CD8-positive, alpha-beta T cell (primary cell): ENCODE measurements at regions of chr1 and their contacts with region 1.

Region 1: GRCh38 chr1:13730751-13731482 is 30.9 kb downstream of the PRDM2 start:
- DNase-seq: peak; percentile 69 to 96 (median 80)
- ATAC-seq: peak; percentile 93
- H3K4me3 ChIP-seq: peak overlapping the region; percentile 27 to 33
- H3K4me3 Mint-ChIP-seq: peak overlapping the region; percentile 74
- H3K27ac ChIP-seq: peak overlapping the region; percentile 84 to 87
- H3K27ac Mint-ChIP-seq: peak overlapping the region; percentile 98
- H3K4me1 ChIP-seq: peaks cover 68% of the 10 kb centered on the region
- H3K4me1 Mint-ChIP-seq: peaks cover 87% of the 10 kb centered on the region
- H3K27me3 ChIP-seq: no peaks in the 10 kb centered on the region
- H3K27me3 Mint-ChIP-seq: no peaks in the 10 kb centered on the region
- CTCF ChIP-seq: no peak

Region 2: GRCh38 chr1:13628711-13629110 is 102.2 kb before region 1 on chr1:
- CTCF ChIA-PET with region 1: no interaction called
- POLR2A ChIA-PET with region 1: no interaction called
- intact Hi-C with region 1: no loop called
- DNase-seq: no peak
- ATAC-seq: no peak
- H3K4me3 ChIP-seq: no peak overlapping the region
- H3K4me3 Mint-ChIP-seq: no peak overlapping the region
- H3K27ac ChIP-seq: no peak overlapping the region
- H3K27ac Mint-ChIP-seq: no peak overlapping the region
- H3K4me1 ChIP-seq: no peaks in the 10 kb centered on the region
- H3K4me1 Mint-ChIP-seq: no peaks in the 10 kb centered on the region
- H3K27me3 ChIP-seq: no peaks in the 10 kb centered on the region
- H3K27me3 Mint-ChIP-seq: peaks cover 19% of the 10 kb centered on the region
- CTCF ChIP-seq: no peak

Region 3: DNA sequence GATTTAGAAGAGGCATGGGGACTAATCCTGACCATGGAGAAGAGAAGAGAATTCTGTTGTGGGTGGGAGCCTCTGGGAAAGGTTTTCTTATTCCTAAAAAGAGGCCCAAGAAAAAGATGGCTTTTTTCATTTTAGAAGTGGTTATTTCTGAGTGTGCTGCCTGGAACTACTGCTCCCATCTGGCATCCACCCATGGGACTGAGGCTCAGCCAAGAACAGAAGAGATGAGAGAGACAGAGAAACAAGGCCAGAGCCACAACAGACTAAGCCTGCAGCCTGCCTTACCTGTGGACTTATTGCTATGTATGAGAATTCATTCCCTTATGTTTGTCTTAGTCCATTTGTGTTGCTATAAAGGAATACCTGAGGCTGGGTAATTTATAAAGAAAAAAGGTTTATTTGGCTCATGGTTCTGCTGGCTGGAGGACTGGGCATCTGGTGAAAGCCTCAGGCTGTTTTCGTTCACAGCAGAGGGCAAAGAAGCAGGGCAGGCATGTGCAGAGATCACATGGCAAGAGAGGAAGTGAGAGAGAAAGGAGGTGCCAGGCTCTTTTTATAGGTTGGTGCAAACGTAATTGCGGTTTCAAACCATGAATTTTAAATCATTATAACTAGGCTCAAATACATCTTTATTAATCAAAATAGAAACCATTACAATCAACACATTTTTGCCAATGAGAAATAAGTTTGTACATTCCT is 88.5 kb before region 1 on chr1:
- CTCF ChIA-PET with region 1: no interaction called
- POLR2A ChIA-PET with region 1: no interaction called
- intact Hi-C with region 1: no loop called
- DNase-seq: no peak
- ATAC-seq: no peak
- H3K4me3 ChIP-seq: no peak overlapping the region
- H3K4me3 Mint-ChIP-seq: no peak overlapping the region
- H3K27ac ChIP-seq: no peak overlapping the region
- H3K27ac Mint-ChIP-seq: no peak overlapping the region
- H3K4me1 ChIP-seq: no peaks in the 10 kb centered on the region
- H3K4me1 Mint-ChIP-seq: no peaks in the 10 kb centered on the region
- H3K27me3 ChIP-seq: no peaks in the 10 kb centered on the region
- H3K27me3 Mint-ChIP-seq: peaks cover 2% of the 10 kb centered on the region
- CTCF ChIP-seq: no peak

Region 4: GRCh38 chr1:13699936-13700520 is 30.9 kb before region 1 on chr1 and contains the start of gene PRDM2:
- CTCF ChIA-PET with region 1: interaction called, 35 read pairs
- POLR2A ChIA-PET with region 1: interaction called, 6 read pairs
- intact Hi-C with region 1: loop called (anchors 1 to 2 kb)
- DNase-seq: peak; percentile 38 to 85 (median 65)
- ATAC-seq: peak; percentile 43
- H3K4me3 ChIP-seq: peak within 1 kb of the TSS; percentile 67 to 80
- H3K4me3 Mint-ChIP-seq: peak within 1 kb of the TSS; percentile 92
- H3K27ac ChIP-seq: peak within 1 kb of the TSS; percentile 94 to 99
- H3K27ac Mint-ChIP-seq: peak within 1 kb of the TSS; percentile 98
- H3K4me1 ChIP-seq: peaks cover 44% of the 10 kb centered on the region
- H3K4me1 Mint-ChIP-seq: peaks cover 52% of the 10 kb centered on the region
- H3K27me3 ChIP-seq: no peaks in the 10 kb centered on the region
- H3K27me3 Mint-ChIP-seq: no peaks in the 10 kb centered on the region
- CTCF ChIP-seq: no peak
- total RNA-seq, gene PRDM2: 170 to 180 TPM

Region 5: DNA sequence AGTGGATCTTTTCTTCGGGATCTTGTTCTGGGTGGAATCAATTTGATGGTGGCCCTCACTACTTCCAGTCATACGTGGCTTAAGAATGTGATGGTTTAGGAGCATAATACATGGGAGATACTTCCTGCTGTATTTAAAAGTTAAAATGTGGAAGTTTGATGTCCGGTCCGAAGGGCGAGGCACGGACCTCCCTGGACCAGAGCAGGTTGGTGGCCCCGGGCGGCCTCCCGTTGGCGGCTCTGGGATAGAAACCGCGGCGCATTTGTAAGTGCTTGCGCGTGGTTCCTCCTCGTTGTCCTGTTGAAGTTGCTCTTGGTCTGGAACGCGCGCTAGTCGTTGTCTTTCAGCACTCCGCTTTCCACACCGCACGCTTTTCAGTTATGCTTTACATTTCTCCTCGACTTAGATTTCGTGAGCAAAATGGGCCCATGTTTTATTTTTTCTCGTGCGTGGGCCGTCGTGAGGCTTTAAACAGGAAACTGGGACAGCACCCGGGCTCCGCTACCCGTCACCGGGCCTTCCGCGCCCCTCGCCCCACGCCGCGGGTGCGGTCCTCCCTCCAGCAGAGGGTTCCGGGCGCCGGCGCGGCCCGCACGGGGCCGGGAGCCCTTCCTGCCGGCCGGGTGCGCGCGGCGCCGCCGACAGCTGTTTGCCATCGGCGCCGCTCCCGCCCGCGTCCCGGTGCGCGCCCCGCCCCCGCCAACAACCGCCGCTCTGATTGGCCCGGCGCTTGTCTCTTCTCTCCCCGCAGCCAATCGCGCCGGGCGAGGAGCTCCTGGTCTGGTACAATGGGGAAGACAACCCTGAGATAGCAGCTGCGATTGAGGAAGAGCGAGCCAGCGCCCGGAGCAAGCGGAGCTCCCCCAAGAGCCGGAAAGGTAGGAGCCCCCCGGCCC is 17.9 kb after region 1 on chr1:
- CTCF ChIA-PET with region 1: interaction called, 14 read pairs
- POLR2A ChIA-PET with region 1: interaction called, 24 read pairs
- intact Hi-C with region 1: loop called (anchors 1 kb)
- DNase-seq: peak; percentile 92 to 99 (median 97)
- ATAC-seq: peak; percentile 84
- H3K4me3 ChIP-seq: peak overlapping the region; percentile 68 to 70
- H3K4me3 Mint-ChIP-seq: peak overlapping the region; percentile 94
- H3K27ac ChIP-seq: peak overlapping the region; percentile 86 to 88
- H3K27ac Mint-ChIP-seq: peak overlapping the region; percentile 98
- H3K4me1 ChIP-seq: peaks cover 48% of the 10 kb centered on the region
- H3K4me1 Mint-ChIP-seq: peaks cover 52% of the 10 kb centered on the region
- H3K27me3 ChIP-seq: no peaks in the 10 kb centered on the region
- H3K27me3 Mint-ChIP-seq: no peaks in the 10 kb centered on the region
- CTCF ChIP-seq: no peak

Region 6: GRCh38 chr1:13764588-13765332 is 33.8 kb after region 1 on chr1:
- CTCF ChIA-PET with region 1: interaction called, 6 read pairs
- POLR2A ChIA-PET with region 1: no interaction called
- intact Hi-C with region 1: loop called in 1 of 2 experiments (anchors 5 kb)
- DNase-seq: peak in 6 of 9 experiments; percentile 13 to 70 (median 36)
- ATAC-seq: peak; percentile 29
- H3K4me3 ChIP-seq: no peak overlapping the region
- H3K4me3 Mint-ChIP-seq: no peak overlapping the region
- H3K27ac ChIP-seq: no peak overlapping the region
- H3K27ac Mint-ChIP-seq: peak overlapping the region; percentile 43
- H3K4me1 ChIP-seq: peaks cover 59% of the 10 kb centered on the region
- H3K4me1 Mint-ChIP-seq: peaks cover 85% of the 10 kb centered on the region
- H3K27me3 ChIP-seq: no peaks in the 10 kb centered on the region
- H3K27me3 Mint-ChIP-seq: no peaks in the 10 kb centered on the region
- CTCF ChIP-seq: no peak